ENCODE measurements at regions of chr10 and their contacts with region 1.

Region 1: DNA sequence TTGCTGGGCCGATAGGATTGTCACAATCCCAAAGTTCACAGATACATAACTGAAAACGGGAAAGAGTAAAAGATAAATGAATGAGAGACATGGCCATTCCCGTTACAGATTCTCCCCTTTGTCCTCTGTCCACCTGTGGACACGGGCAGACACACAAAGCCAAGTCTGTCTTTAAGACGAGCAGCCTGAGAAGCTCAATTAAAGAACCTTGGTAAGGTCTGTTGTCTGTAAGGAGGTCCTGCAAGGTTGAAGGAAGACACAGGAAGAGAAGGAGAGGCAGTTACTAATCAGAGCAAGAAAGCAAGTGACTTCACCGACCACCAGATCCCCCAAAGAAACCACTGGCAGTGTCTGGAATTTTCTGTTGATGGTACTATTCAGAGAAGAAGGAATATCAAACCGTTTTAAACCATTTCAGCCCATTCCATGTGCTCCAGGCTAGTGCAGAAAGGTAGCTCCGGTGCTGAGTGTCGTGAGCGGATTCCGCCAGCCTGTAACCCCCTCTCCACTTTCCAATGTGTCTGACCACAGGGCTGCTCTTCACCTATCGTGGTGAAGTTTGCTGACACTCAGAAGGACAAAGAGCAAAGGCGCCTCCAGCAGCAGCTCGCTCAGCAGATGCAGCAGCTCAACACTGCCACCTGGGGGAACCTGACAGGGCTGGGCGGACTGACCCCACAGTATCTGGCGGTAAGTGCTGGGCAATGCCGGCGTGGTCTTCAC is 252.6 kb downstream of the CELF2 start:
- DNase-seq: peak; percentile 50
- ATAC-seq: peak; percentile 100
- H3K4me3 ChIP-seq: no peak overlapping the region
- H3K27ac ChIP-seq: no peak overlapping the region
- H3K4me1 ChIP-seq: 0 out of 4 replicates have a peak, but pooled peaks cover 0 to 4% of the 10 kb centered on the region in 2 experiments
- H3K27me3 ChIP-seq: peaks cover 7% of the 10 kb centered on the region; the same call in 1 of the 2 replicates
- CTCF ChIP-seq: peak; percentile 31 to 96 (median 90); a peak in 5 of 6 replicates
- POLR2A ChIP-seq: no peak
- RAD21 ChIP-seq: peak; percentile 72

Region 2: DNA sequence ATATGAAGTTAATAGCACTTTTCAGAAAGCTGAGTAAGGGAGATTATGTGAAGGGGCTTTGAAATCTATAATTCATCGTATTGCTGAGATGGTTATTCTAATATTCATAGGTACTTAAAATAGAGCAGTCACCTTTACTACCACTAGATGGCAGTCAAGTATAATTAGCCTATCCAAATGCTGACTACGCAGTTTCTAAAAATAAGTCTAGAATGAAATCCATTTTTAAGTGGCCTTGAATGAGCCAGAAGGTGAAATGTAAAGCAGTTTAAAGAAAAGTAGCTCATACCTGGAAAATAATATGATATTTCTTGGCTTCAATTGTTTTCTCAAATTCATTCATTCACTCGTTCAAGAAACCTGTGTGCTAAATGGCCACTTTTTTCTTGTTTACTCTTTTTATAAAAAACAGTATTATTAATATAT is 1938.7 kb before region 1 on chr10:
- CTCF ChIA-PET with region 1: no interaction called
- POLR2A ChIA-PET with region 1: no interaction called
- RAD21 ChIA-PET with region 1: no interaction called
- intact Hi-C with region 1: loop called (anchors 1 kb)
- DNase-seq: peak; percentile 19
- ATAC-seq: no peak
- H3K4me3 ChIP-seq: no peak overlapping the region
- H3K27ac ChIP-seq: no peak overlapping the region
- H3K4me1 ChIP-seq: no peaks in the 10 kb centered on the region
- H3K27me3 ChIP-seq: no peaks in the 10 kb centered on the region
- CTCF ChIP-seq: peak; percentile 22 to 75 (median 57); a peak in 5 of 6 replicates
- POLR2A ChIP-seq: no peak
- RAD21 ChIP-seq: peak; percentile 66

Region 3: DNA sequence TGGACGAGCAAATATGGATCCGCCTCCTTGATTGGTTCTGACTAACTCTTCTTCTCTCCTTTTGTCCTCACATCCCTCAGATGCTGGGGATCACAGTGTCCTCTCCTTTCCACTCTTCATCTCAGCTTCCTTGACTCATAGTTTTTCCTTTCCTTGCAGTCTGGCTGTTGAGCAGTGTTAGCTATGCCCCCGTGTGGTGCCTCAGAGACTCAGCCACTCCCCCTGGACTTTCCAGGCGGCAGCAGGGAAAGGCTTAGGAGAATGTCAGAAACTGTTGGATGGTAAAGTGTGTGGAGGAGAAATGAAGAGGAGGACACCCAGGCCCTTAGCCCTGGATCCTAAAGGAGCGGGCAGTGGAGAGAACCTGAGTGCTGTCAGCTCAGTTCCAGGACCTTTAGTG is 14.9 kb after region 1 on chr10:
- CTCF ChIA-PET with region 1: interaction called, 11 read pairs
- POLR2A ChIA-PET with region 1: no interaction called
- RAD21 ChIA-PET with region 1: no interaction called
- intact Hi-C with region 1: no loop called
- DNase-seq: no peak
- ATAC-seq: peak; percentile 67
- H3K4me3 ChIP-seq: no peak overlapping the region
- H3K27ac ChIP-seq: no peak overlapping the region
- H3K4me1 ChIP-seq: no peaks in the 10 kb centered on the region
- H3K27me3 ChIP-seq: no peaks in the 10 kb centered on the region
- CTCF ChIP-seq: peak in 1 of 3 experiments; percentile 20; a peak in 1 of 6 replicates
- POLR2A ChIP-seq: no peak
- RAD21 ChIP-seq: no peak; the same call in 1 of the 2 replicates

Region 4: DNA sequence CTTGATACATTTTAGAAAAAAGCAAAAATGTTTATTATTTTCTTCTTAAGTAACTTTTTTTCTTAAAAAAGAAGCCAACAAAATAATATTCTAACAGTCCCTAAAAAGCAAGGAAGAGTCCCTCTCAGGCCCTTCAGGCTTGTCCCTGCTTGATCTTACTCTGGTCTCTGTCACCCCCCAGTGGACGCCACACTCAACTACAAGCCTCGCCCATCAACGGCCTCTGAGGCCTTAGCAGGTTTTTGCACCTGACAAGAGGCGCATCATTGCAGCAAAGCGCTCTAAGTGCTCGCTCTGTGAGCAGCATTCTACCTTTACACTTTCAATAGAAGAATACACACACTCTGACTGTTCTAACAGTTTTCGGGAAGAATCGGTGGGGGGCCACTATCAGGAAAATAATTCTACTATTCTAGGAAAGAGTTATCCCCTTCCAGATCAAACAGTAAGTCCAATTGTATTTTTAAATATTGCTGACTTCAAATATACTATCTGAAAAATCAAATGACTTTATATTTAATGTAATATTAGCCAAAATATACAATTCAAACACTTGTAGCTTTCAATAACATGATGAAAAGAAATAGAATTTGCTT is 202.0 kb after region 1 on chr10:
- CTCF ChIA-PET with region 1: no interaction called
- POLR2A ChIA-PET with region 1: no interaction called
- RAD21 ChIA-PET with region 1: no interaction called
- intact Hi-C with region 1: loop called (anchors 2 kb)
- DNase-seq: peak; percentile 37
- ATAC-seq: peak; percentile 96
- H3K4me3 ChIP-seq: no peak overlapping the region
- H3K27ac ChIP-seq: no peak overlapping the region
- H3K4me1 ChIP-seq: no peaks in the 10 kb centered on the region
- H3K27me3 ChIP-seq: no peaks in the 10 kb centered on the region
- CTCF ChIP-seq: peak; percentile 45 to 83 (median 82); a peak in 5 of 6 replicates
- POLR2A ChIP-seq: no peak
- RAD21 ChIP-seq: peak; percentile 70

Measured in HCT116 (cell line).